CD8-positive, alpha-beta memory T cell (primary cell): ENCODE measurements at regions of chr12 and their contacts with region 1.

Region 1: DNA sequence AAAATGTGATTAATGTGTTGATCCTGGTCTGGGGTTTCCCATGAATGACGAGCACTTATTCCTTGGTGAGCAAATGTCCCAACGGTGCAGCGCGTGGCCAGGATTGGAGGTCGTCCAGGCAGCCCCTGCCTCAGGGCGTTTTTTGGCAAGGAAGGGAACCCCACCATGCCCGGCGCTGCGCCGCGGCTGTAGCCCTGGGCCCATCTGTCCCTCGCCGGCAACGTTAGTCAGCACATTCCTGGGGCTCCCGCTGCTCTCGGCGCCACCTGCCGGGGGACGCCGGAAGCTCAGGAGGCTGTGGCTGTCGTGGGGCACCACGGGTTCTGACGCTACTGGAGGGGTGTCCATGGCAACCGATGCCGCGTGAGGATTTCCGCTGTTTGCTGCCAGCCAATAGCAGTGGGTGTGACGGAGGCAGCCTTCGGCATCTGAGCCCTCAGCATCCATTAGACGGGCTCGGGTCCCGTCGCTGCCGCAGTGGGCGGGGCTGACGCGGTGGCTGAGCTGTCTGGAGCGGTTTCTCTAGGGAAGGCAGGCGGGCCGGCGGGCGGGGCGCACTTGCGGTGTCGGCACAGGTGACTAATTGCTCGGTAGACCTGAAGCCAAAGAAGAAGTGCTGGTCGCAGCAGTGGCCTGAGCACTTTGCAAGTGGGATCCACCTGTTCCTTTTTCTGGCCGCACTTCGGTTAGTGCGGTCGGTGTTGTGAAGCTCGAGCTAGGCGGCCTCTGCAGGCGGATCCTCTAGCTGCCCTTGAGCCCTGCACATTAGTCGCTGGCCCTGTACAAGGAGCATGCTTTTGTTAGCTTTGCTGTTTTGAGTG is 29.5 kb downstream of the RAB35 start:
- DNase-seq: peak; percentile 99 to 100 (median 100)
- H3K4me3 ChIP-seq: peak overlapping the region; percentile 37
- H3K4me3 Mint-ChIP-seq: peak overlapping the region; percentile 65 to 91 (median 81)
- H3K27ac ChIP-seq: peak overlapping the region; percentile 29
- H3K27ac Mint-ChIP-seq: peak overlapping the region; percentile 86 to 96 (median 94)
- H3K4me1 ChIP-seq: peaks cover 14% of the 10 kb centered on the region
- H3K4me1 Mint-ChIP-seq: peaks cover 15 to 32% (median 29%) of the 10 kb centered on the region in 3 donors
- H3K27me3 ChIP-seq: no peaks in the 10 kb centered on the region
- H3K27me3 Mint-ChIP-seq: peaks cover 0 to 2% of the 10 kb centered on the region in 2 donors

Region 2: DNA sequence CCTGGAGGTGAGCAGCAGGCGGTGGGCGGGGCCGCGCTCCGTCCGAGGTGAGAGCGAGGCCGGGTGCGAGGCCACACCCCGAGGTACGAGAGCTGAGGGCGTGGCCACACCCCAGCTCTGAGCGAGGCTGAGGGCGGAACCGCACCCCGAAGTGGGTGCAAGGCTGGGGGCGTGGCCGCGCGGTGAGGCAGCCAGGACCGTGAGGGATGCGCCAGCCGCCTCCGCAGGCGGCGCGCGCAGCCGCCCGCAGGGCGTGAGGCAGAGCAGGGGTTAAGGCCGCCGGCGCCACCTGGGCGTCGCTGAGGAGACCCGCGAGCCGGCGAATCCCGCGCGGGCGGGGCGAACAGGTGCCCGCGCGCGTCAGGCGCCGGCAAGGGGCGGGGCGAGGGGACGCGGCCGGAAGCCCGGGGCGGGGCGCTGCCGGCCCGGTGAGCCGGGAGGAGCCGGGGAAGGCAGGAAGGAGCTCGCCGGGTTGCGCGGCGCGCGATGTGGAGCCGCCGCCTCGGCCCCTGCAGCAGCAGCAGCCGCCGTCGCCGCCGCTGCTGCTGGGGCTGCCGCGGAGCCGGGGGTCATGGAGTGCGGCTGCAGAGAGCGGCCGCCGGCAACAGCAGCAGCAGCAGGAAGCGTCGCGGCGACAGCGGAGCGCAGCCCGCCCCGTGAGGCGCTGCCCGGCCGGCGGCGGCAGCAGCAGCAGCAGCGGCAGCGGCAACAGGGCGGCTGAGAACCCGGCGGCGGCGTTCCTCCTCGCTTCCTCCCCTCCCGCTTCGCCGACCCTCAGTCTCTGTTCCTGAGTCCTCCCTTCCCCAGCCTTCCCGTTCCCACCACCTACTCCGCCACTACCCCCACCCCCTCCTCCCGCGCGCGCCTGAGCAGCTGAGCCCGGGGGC is 98.0 kb before region 1 on chr12 and contains the start of gene BICDL1:
- CTCF ChIA-PET with region 1: interaction called, 30 read pairs
- POLR2A ChIA-PET with region 1: interaction called, 36 read pairs
- DNase-seq: peak; percentile 94 to 99 (median 99)
- H3K4me3 ChIP-seq: peak within 1 kb of the TSS; percentile 67
- H3K4me3 Mint-ChIP-seq: peak within 1 kb of the TSS; percentile 85 to 95 (median 87)
- H3K27ac ChIP-seq: peak within 1 kb of the TSS; percentile 75
- H3K27ac Mint-ChIP-seq: peak within 1 kb of the TSS; percentile 78 to 99 (median 97)
- H3K4me1 ChIP-seq: peaks cover 24% of the 10 kb centered on the region
- H3K4me1 Mint-ChIP-seq: peaks cover 34 to 44% (median 43%) of the 10 kb centered on the region in 3 donors
- H3K27me3 ChIP-seq: no peaks in the 10 kb centered on the region
- H3K27me3 Mint-ChIP-seq: no peaks in the 10 kb centered on the region
- total RNA-seq, gene BICDL1: 106 to 109 TPM